Prostate gland (tissue), 2 donors: ENCODE measurements at regions of chr5 and their contacts with region 1.

Region 1: GRCh38 chr5:63963080-63963735 is 963 bp upstream of the HTR1A start:
- DNase-seq: no peak
- H3K4me3 ChIP-seq: no peak overlapping the region
- H3K27ac ChIP-seq: no peak overlapping the region
- H3K4me1 ChIP-seq: no peaks in the 10 kb centered on the region
- H3K27me3 ChIP-seq: peaks cover 22% of the 10 kb centered on the region
- CTCF ChIP-seq: no peak
- POLR2A ChIP-seq: no peak

Region 2: GRCh38 chr5:63401436-63402046 is 561.7 kb before region 1 on chr5:
- intact Hi-C with region 1: loop called (anchors 5 kb)
- DNase-seq: peak; percentile 23
- H3K4me3 ChIP-seq: no peak overlapping the region
- H3K27ac ChIP-seq: no peak overlapping the region
- H3K4me1 ChIP-seq: no peaks in the 10 kb centered on the region
- H3K27me3 ChIP-seq: no peaks in the 10 kb centered on the region
- CTCF ChIP-seq: peak in 3 of 4 experiments; percentile 22 to 51 (median 47)
- POLR2A ChIP-seq: no peak

Region 3: GRCh38 chr5:64417390-64417789 is 454.2 kb after region 1 on chr5:
- intact Hi-C with region 1: no loop called
- DNase-seq: no peak
- H3K4me3 ChIP-seq: no peak overlapping the region
- H3K27ac ChIP-seq: no peak overlapping the region
- H3K4me1 ChIP-seq: no peaks in the 10 kb centered on the region
- H3K27me3 ChIP-seq: no peaks in the 10 kb centered on the region
- CTCF ChIP-seq: no peak
- POLR2A ChIP-seq: no peak